ENCODE measurements at regions of chr18 and their contacts with region 1.

Region 1: DNA sequence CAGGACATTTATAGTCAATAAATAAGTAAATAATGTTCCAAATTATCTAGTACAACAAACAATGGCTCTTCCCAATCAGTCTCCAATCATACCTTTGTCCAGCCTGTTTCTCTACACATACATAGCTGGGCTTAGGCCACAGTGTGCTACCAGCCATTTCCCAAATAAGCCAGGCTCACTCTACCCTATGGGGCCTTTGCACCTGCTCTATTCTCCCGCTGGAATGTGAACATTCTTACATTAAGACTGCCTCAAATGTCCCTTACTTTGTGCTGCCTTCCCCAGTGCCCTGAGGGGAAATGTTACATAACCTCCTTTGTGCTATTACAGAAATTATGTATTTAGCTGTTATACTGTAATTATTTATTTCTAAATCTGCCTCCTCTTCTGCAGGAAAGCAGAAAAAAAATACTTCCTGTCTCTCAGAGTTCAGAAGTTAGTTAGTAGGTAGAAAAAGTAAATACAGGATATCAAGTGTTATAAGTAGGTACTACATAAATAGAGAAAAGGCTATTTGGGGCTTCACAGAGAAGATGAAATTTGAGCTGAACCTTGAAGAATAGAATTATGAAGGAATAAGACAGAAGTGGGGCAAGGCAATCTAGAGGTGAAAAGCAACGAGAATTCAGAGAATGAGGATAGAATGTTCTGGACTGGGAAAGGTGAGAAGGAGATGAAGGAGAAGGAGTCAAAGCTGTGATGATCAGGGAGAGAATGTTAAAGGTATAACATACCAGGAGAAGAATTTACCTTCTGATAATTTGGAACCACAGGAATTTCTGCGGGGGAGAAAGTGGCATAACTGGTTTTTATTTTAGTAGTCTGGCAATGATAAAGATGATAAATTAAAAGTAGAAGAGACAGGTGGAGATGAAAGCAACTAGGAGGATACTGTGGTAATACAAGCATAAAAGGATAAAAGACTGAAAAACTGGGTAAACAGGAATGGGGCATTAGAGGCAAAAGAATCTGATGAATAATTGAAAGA is 37.0 kb downstream of the ROCK1 start:
- DNase-seq: peak; percentile 88
- ATAC-seq: peak; percentile 71
- H3K4me3 ChIP-seq: peak overlapping the region; percentile 35; the same call in 1 of the 2 replicates
- H3K27ac ChIP-seq: no peak overlapping the region
- H3K4me1 ChIP-seq: peaks cover 22% of the 10 kb centered on the region
- H3K27me3 ChIP-seq: no peaks in the 10 kb centered on the region
- CTCF ChIP-seq: no peak

Region 2: GRCh38 chr18:21085579-21086166 is 11.0 kb after region 1 on chr18:
- CTCF ChIA-PET with region 1: no interaction called
- POLR2A ChIA-PET with region 1: no interaction called
- intact Hi-C with region 1: loop called (anchors 2 kb)
- DNase-seq: peak; percentile 31
- ATAC-seq: peak; percentile 64
- H3K4me3 ChIP-seq: no peak overlapping the region
- H3K27ac ChIP-seq: no peak overlapping the region
- H3K4me1 ChIP-seq: peaks cover 4% of the 10 kb centered on the region; the same call in 1 of the 2 replicates
- H3K27me3 ChIP-seq: no peaks in the 10 kb centered on the region
- CTCF ChIP-seq: no peak